Heart right ventricle (tissue), 16 donors: ENCODE measurements at regions of chr2 and their contacts with region 1.

Region 1: DNA sequence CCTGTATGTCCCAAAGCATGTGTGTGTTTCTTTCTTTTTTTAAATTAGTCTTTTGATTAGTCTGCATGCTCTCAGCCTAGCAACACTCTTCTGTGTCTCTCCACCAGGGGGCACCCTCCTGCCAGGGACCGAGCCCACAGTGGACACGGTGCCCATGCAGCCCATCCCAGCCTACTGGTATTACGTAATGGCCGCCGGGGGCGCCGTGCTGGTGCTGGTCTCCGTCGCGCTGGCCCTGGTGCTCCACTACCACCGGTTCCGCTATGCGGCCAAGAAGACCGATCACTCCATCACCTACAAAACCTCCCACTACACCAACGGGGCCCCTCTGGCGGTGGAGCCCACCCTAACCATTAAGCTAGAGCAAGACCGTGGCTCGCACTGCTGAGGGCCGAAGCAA is 93.8 kb downstream of the NRP2 start:
- DNase-seq: peak; percentile 37 to 41
- ATAC-seq: peak in 7 of 8 donors; percentile 49 to 80 (median 74)
- H3K4me3 ChIP-seq: no peak overlapping the region
- H3K27ac ChIP-seq: no peak overlapping the region
- H3K4me1 ChIP-seq: no peaks in the 10 kb centered on the region
- H3K27me3 ChIP-seq: peaks cover 0 to 11% (median 0%) of the 10 kb centered on the region in 7 donors
- CTCF ChIP-seq: peak; percentile 30 to 75 (median 64)

Region 2: DNA sequence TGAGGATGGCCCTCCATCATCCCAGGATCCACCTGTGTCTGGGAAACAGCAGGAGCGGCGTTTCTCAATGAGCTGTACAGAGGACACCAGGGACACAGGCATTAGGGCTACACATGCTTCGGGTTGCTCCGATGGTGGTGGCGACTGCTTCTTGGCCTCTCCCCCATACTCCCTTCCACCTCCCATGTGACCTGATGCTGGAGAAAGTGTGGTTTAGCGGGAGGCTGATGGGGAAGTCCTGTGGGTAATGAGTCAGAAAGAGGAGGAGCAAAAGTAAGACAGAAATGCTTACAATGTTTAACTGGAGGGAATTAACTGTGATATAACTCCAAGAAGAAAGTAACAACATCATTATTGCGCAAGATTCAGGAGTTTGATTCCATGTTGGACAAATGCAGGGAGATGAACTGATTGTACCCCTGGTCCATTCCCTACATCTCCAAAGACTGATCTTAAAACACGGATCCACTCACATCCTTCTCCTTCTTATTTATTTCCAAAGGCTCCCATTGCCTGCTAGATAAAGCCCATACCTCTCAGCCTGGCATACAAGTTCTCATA is 92.7 kb after region 1 on chr2:
- intact Hi-C with region 1: no loop called
- DNase-seq: no peak
- ATAC-seq: peak in 1 of 8 donors; percentile 47
- H3K4me3 ChIP-seq: no peak overlapping the region
- H3K27ac ChIP-seq: no peak overlapping the region
- H3K4me1 ChIP-seq: peaks cover 0 to 18% (median 0%) of the 10 kb centered on the region in 9 donors
- H3K27me3 ChIP-seq: peaks cover 0 to 7% (median 0%) of the 10 kb centered on the region in 7 donors
- CTCF ChIP-seq: no peak

Region 3: GRCh38 chr2:205885492-205886099 is 109.5 kb after region 1 on chr2:
- intact Hi-C with region 1: loop called in 6 of 10 experiments (anchors 2 to 10 kb)
- DNase-seq: peak; percentile 76 to 87
- ATAC-seq: peak; percentile 78 to 95 (median 89)
- H3K4me3 ChIP-seq: no peak overlapping the region
- H3K27ac ChIP-seq: no peak overlapping the region
- H3K4me1 ChIP-seq: peaks cover 0 to 4% (median 0%) of the 10 kb centered on the region in 9 donors
- H3K27me3 ChIP-seq: no peaks in the 10 kb centered on the region
- CTCF ChIP-seq: peak; percentile 75 to 92 (median 86)

Region 4: DNA sequence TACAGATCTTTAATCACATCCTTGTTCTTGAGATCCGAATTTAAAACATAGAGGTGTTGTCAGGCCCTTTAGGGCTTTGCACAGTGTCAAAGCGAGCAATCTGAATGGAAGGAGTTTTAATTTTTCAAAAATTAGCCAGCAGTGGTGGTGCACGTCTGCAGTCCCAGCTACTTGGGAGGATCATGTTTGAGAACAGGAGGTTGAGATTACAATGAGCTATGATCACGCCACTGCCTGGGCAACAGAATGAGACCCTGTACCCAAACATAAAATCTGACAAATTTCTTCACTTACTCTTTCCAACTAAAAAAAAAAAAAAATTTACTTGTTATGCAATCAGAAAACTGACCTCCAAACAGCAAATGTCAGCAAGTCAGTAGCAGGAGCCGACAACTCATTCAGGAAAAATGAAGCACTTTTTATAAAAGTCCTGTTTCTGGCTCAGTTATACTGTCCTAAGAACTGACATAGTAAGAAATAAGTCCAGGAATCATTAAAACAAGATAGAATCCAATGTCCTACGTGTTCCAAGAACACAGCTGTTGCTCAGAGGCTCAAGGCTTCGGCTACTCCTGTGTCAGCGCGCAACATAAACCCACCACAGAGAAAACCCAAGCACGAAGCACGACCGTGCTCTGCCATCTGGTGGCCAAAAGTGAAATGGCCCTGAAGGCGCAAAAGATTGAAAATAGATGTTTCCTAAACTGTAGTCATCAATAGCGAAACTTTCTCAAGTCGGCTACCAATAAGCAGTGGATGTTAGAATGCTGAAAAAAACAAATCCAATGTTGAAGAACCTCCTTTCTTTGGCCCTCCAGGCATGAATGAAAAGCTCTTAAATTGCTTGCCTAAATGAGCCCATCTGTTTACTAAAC is 171.7 kb after region 1 on chr2:
- intact Hi-C with region 1: loop called in 1 of 10 experiments (anchors 5 kb)
- DNase-seq: peak; percentile 57 to 65
- ATAC-seq: peak; percentile 71 to 93 (median 90)
- H3K4me3 ChIP-seq: no peak overlapping the region
- H3K27ac ChIP-seq: peak overlapping the region in 3 of 10 donors; percentile 2 to 22 (median 2)
- H3K4me1 ChIP-seq: peaks cover 0 to 33% (median 0%) of the 10 kb centered on the region in 9 donors
- H3K27me3 ChIP-seq: peaks cover 0 to 8% (median 0%) of the 10 kb centered on the region in 7 donors
- CTCF ChIP-seq: peak; percentile 62 to 99 (median 91)